ENCODE measurements at regions of chr6 and their contacts with region 1.

Region 1: GRCh38 chr6:105424175-105424783 is 21.4 kb upstream of the PREP start:
- DNase-seq: peak; percentile 48
- H3K4me3 Mint-ChIP-seq: no peak overlapping the region
- H3K27ac Mint-ChIP-seq: no peak overlapping the region
- H3K4me1 Mint-ChIP-seq: no peaks in the 10 kb centered on the region
- H3K27me3 Mint-ChIP-seq: peaks cover 5% of the 10 kb centered on the region

Region 2: GRCh38 chr6:104325341-104326172 is 1098.7 kb before region 1 on chr6:
- intact Hi-C with region 1: no loop called
- DNase-seq: no peak
- H3K4me3 Mint-ChIP-seq: no peak overlapping the region
- H3K27ac Mint-ChIP-seq: no peak overlapping the region
- H3K4me1 Mint-ChIP-seq: no peaks in the 10 kb centered on the region
- H3K27me3 Mint-ChIP-seq: no peaks in the 10 kb centered on the region

Region 3: GRCh38 chr6:105087571-105088211 is 336.6 kb before region 1 on chr6:
- intact Hi-C with region 1: loop called (anchors 1 kb)
- DNase-seq: no peak
- H3K4me3 Mint-ChIP-seq: no peak overlapping the region
- H3K27ac Mint-ChIP-seq: no peak overlapping the region
- H3K4me1 Mint-ChIP-seq: no peaks in the 10 kb centered on the region
- H3K27me3 Mint-ChIP-seq: peaks cover 10% of the 10 kb centered on the region